HEK293 (cell line): ENCODE measurements at regions of chr13 and their contacts with region 1.

Region 1: DNA sequence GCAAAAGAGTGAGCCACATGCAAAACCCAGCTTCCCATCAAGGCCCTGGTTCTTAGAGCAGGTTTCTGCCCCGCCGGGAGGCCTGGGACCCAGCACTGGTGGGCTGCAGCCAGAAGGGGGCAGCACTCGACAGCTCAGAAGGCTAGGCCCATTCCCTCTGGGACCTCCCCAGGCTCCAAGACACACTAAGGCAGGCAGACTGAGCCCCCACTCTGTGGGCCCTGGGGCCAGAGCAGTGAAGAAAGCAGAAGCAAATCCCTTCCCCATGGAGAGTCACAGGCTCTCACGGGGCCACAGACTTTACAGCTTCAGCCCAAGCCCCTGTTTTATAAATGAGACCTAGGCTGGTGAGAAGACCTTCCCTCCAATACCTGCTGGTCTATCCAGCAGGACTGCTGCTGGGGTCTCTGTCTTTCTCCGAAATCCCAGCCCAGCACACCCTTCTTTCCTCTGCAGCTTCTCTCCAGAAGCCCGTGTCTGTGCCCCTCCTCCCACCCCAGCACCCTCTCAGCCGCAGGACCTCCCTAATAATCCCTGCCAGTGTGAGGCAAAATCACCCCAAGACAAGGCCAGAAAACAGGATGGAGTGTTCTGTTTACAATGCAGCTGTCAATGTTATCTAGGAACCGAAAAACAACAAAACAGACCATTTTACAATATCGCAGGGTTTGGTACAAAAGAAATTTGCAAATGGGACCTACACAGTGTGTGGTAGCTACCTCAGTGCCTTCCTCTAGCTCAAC is 109.3 kb downstream of the ABCC4 start:
- H3K4me3 ChIP-seq: no peak overlapping the region
- H3K27ac ChIP-seq: no peak overlapping the region
- H3K4me1 ChIP-seq: no peaks in the 10 kb centered on the region; the same call in 1 of the 2 replicates
- CTCF ChIP-seq: no peak

Region 2: DNA sequence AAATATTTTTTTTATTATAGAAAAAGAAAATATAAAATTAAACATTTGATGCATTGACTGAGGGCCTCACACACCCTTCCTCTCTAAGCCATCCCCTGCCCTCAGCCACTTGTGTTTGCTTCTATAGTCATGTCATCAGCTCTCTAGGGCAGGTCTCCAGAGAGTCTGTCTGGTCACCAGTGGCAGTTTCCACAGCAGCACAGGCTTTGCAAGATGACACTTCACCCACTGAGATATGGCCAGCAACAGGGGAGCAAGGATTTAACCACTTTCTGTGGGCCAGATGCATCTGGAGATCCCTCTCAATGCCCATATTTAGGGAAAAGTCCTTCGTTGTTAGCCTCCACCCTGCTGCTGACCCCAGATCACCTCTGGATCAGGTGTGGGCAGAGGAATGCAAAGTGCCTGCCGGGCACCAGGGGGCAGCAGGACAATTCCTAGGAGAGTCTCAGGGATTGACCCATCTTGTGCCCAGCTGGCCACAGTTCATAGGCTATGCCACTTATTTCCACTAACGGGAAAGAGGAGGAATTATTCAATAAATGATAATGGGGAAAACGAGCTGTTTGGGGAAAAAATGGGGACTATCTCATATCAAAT is 104.4 kb after region 1 on chr13:
- CTCF ChIA-PET with region 1: interaction called, 11 read pairs
- POLR2A ChIA-PET with region 1: no interaction called
- H3K4me3 ChIP-seq: no peak overlapping the region
- H3K27ac ChIP-seq: no peak overlapping the region
- H3K4me1 ChIP-seq: peaks cover 7% of the 10 kb centered on the region; the same call in 1 of the 2 replicates
- CTCF ChIP-seq: no peak

Region 3: DNA sequence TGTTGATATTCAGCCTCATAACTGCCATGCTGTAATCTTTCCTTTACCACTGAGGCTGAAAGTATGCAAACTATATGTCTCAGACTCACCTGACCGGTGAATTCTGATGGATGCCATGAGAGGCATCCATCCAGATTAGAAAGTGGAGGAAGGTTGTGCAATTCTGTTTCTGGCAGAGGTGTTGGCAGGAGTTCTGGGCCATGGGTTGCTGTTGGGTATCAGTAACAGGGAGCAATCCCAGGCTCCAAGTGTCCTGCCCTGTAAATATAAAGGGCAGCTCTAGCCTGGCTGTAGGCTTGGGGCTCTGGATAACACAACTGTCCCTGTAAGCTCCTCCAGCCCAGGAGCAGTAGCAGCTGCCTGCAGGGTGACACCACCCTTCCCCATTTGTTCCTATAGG is 186.6 kb after region 1 on chr13:
- CTCF ChIA-PET with region 1: interaction called, 101 read pairs
- POLR2A ChIA-PET with region 1: no interaction called
- H3K4me3 ChIP-seq: no peak overlapping the region
- H3K27ac ChIP-seq: no peak overlapping the region
- H3K4me1 ChIP-seq: 0 out of 2 replicates have a peak, but pooled peaks cover 2% of the 10 kb centered on the region
- CTCF ChIP-seq: no peak

Region 4: GRCh38 chr13:95403828-95404522 is 212.0 kb after region 1 on chr13:
- CTCF ChIA-PET with region 1: interaction called, 250 read pairs
- POLR2A ChIA-PET with region 1: interaction called, 3 read pairs
- H3K4me3 ChIP-seq: no peak overlapping the region
- H3K27ac ChIP-seq: no peak overlapping the region
- H3K4me1 ChIP-seq: no peaks in the 10 kb centered on the region
- CTCF ChIP-seq: no peak; the same call in 1 of the 2 replicates

Region 5: DNA sequence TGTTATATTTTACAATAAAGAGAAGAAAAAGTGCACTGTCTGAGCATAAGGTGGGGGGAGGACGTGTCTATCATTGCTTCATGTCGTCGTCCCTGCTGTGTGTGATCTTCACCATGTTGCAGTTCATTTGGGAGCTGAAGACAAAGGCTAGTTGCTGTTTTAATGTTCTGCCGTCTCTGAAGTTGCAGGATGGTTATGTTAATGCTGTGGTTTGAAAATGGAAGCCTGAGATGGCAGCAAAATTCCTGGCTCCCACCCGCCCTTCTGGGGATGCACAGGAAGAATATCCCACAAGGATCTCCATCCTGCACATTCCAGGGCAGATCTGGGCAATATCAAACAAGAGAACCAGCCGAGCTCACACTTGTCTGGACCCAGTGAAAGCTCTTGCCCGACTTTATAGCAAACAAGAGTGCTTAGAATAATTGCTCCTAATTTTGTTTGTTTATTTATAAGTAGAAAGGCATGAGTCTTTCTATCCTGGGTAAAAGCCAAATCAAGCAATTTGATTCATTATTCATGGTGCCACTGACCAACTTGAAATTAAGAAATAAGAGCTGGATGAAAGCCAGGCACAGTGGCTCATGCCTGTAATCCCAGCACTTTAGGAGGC is 219.5 kb after region 1 on chr13:
- CTCF ChIA-PET with region 1: interaction called, 250 read pairs
- POLR2A ChIA-PET with region 1: no interaction called
- H3K4me3 ChIP-seq: no peak overlapping the region
- H3K27ac ChIP-seq: no peak overlapping the region
- H3K4me1 ChIP-seq: no peaks in the 10 kb centered on the region
- CTCF ChIP-seq: no peak

Region 6: GRCh38 chr13:95447814-95448213 is 255.8 kb after region 1 on chr13:
- CTCF ChIA-PET with region 1: interaction called, 11 read pairs
- POLR2A ChIA-PET with region 1: no interaction called
- H3K4me3 ChIP-seq: no peak overlapping the region
- H3K27ac ChIP-seq: no peak overlapping the region
- H3K4me1 ChIP-seq: no peaks in the 10 kb centered on the region
- CTCF ChIP-seq: no peak

Region 7: GRCh38 chr13:95834134-95834765 is 642.3 kb after region 1 on chr13:
- CTCF ChIA-PET with region 1: interaction called, 25 read pairs
- POLR2A ChIA-PET with region 1: no interaction called
- H3K4me3 ChIP-seq: no peak overlapping the region
- H3K27ac ChIP-seq: no peak overlapping the region
- H3K4me1 ChIP-seq: no peaks in the 10 kb centered on the region
- CTCF ChIP-seq: no peak